ENCODE measurements at regions of chr7 and their contacts with region 1.

Region 1: GRCh38 chr7:101542527-101543241 is 86.4 kb downstream of the MYL10 start:
- DNase-seq: no peak

Region 2: GRCh38 chr7:101363734-101364374 is 178.8 kb before region 1 on chr7:
- intact Hi-C with region 1: loop called (anchors 2 kb)
- DNase-seq: no peak

Region 3: GRCh38 chr7:102272075-102272917 is 729.6 kb after region 1 on chr7:
- intact Hi-C with region 1: loop called (anchors 2 kb)
- DNase-seq: peak; percentile 86

Region 4: DNA sequence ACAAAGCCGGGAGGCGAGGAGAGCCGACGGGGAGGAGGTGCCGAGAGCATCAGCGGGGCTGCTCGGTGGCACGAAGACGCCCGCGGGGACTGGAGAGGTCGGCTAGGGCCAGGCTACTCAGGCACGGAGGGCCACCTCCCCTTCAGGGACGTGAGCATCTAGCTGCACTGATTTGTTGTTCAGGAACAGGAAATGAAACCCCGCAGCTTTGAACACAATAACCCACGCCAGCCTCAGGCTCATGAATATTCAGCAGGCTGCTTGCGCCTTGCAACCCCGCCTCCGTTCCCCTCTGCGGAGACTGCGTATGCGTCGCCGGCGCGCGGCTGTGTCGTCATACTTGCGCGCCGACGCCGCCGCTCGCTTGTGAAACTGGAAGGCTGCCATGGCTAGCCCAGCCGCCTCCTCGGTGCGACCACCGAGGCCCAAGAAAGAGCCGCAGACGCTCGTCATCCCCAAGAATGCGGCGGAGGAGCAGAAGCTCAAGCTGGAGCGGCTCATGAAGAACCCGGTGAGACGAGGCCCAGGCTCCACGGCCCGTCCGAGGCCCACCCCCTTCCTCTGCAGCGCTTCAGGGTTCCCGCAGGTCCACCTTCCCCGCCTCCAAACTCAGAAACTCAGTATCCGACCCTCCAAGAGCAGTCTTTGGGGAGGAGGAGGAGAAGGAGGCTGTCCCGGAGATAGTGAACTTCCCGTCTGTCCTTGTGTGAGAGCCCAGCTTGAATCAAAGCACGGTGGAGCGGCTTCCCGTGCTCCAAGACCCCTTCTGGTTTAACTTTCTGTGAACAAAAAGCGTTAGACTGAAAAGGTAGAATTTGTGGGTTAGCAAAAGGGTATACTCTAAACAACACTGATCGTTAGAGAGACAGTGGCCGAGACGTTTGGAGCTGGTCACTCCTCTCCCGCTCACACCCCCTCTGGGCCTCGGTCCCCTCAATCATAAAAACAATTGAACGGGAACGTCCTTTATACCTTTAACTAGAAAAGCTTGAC is 853.6 kb after region 1 on chr7 and contains the start of gene PRKRIP1:
- intact Hi-C with region 1: loop called (anchors 10 kb)
- DNase-seq: peak; percentile 89
- total RNA-seq, gene PRKRIP1: 15.4 TPM